ENCODE measurements at regions of chr16 and their contacts with region 1.

Region 1: DNA sequence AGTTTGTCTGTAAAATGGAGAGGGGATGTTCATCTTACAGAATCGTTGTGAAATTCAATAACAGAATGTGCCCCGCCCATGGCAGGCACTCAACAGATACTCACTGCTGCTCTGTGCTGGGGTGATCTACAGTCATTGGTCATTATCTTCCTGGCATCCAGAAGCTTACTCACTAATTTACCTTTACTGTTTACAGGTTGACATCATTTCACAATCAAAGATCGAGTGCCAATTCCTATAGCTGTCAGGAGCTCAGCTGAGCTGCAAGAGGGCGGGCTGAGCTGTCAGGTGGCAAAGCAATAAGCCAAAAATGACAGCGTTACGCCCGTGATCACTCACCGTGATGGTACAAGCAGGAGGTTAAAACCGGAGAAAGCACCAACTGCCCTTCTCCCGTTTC is 51.2 kb downstream of the LITAF start:
- DNase-seq: no peak
- ATAC-seq: no peak
- H3K4me3 Mint-ChIP-seq: no peak overlapping the region
- H3K27ac Mint-ChIP-seq: no peak overlapping the region
- H3K4me1 Mint-ChIP-seq: peaks cover 13% of the 10 kb centered on the region
- H3K27me3 Mint-ChIP-seq: no peaks in the 10 kb centered on the region
- CTCF ChIP-seq: no peak

Region 2: GRCh38 chr16:11452746-11453389 is 82.6 kb before region 1 on chr16:
- CTCF ChIA-PET with region 1: no interaction called
- POLR2A ChIA-PET with region 1: no interaction called
- DNase-seq: no peak
- ATAC-seq: no peak
- H3K4me3 Mint-ChIP-seq: no peak overlapping the region
- H3K27ac Mint-ChIP-seq: peak overlapping the region; percentile 77
- H3K4me1 Mint-ChIP-seq: peaks cover 4% of the 10 kb centered on the region; the same call in 1 of the 2 replicates
- H3K27me3 Mint-ChIP-seq: no peaks in the 10 kb centered on the region
- CTCF ChIP-seq: no peak

Region 3: GRCh38 chr16:11501632-11502031 is 33.8 kb before region 1 on chr16:
- CTCF ChIA-PET with region 1: interaction called, 27 read pairs
- POLR2A ChIA-PET with region 1: interaction called, 4 read pairs
- DNase-seq: peak; percentile 74
- ATAC-seq: peak; percentile 82
- H3K4me3 Mint-ChIP-seq: peak overlapping the region; percentile 29
- H3K27ac Mint-ChIP-seq: no peak overlapping the region
- H3K4me1 Mint-ChIP-seq: peaks cover 49% of the 10 kb centered on the region
- H3K27me3 Mint-ChIP-seq: no peaks in the 10 kb centered on the region; the same call in 1 of the 2 replicates
- CTCF ChIP-seq: no peak

Region 4: DNA sequence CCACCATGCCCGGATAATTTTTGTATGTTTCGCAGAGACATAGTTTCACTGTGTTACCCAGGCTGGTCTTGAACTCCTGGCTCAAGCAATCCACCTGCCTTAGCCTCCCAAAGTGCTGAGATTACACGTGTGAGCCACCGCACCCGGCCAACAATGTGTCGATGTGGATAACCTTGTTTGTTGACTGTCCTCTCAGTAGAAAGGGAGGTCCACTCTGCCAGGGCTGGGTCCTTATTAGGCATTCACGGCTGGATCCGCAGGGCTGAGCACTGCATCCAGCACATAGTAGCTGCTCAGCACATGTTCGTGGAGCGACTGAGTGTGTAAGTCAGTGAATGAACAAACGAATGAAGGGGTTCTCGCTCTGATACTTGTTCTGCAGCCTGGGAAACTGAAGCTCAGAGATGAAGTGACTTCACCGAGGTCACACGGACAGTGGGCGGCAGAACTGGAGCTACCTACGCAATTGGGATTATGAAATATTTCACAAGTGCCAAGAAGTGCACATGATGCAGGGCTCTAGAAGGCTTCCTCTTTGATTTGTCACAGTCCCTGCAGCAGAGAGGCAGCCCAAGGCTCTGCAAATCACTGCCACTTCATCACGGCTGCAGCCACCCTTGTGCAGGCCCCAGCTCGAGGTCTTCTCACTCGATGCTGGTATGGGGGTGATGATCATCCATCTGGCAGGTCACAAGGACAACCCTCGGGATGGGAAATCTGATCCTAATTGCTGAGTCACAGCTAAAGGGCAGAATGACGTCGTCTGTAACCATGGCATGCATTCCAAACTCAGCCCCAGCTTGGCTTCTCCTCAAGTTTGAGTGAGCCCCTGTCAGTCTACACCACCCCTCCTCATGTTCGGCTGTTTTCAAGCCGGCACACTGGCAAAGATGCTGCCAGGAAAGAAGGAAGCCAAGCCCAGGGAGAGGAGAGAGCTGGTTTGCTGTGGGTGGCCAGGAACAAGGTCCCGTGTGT is 104.7 kb after region 1 on chr16:
- CTCF ChIA-PET with region 1: interaction called, 28 read pairs
- POLR2A ChIA-PET with region 1: interaction called, 3 read pairs
- DNase-seq: no peak
- ATAC-seq: no peak
- H3K4me3 Mint-ChIP-seq: no peak overlapping the region
- H3K27ac Mint-ChIP-seq: no peak overlapping the region; the same call in 1 of the 2 replicates
- H3K4me1 Mint-ChIP-seq: peaks cover 30% of the 10 kb centered on the region
- H3K27me3 Mint-ChIP-seq: peaks cover 6% of the 10 kb centered on the region; the same call in 1 of the 2 replicates
- CTCF ChIP-seq: no peak

Region 5: GRCh38 chr16:11658894-11659708 is 123.6 kb after region 1 on chr16:
- CTCF ChIA-PET with region 1: interaction called, 12 read pairs
- POLR2A ChIA-PET with region 1: no interaction called
- DNase-seq: no peak
- ATAC-seq: peak; percentile 55
- H3K4me3 Mint-ChIP-seq: no peak overlapping the region
- H3K27ac Mint-ChIP-seq: peak overlapping the region; percentile 50; the same call in 1 of the 2 replicates
- H3K4me1 Mint-ChIP-seq: peaks cover 11% of the 10 kb centered on the region
- H3K27me3 Mint-ChIP-seq: no peaks in the 10 kb centered on the region
- CTCF ChIP-seq: no peak

Region 6: GRCh38 chr16:11797166-11797956 is 261.9 kb after region 1 on chr16 and contains the start of gene ZC3H7A:
- CTCF ChIA-PET with region 1: interaction called, 10 read pairs
- POLR2A ChIA-PET with region 1: no interaction called
- DNase-seq: peak; percentile 95
- ATAC-seq: peak; percentile 99
- H3K4me3 Mint-ChIP-seq: peak within 1 kb of the TSS; percentile 86
- H3K27ac Mint-ChIP-seq: peak within 1 kb of the TSS; percentile 96
- H3K4me1 Mint-ChIP-seq: peaks cover 35% of the 10 kb centered on the region
- H3K27me3 Mint-ChIP-seq: no peaks in the 10 kb centered on the region
- CTCF ChIP-seq: peak; percentile 90
- total RNA-seq, gene ZC3H7A: 39.9 to 45.9 TPM (median 43.0 TPM) in 3 replicates